H1 (cell line): ENCODE measurements at regions of chr2 and their contacts with region 1.

Region 1: DNA sequence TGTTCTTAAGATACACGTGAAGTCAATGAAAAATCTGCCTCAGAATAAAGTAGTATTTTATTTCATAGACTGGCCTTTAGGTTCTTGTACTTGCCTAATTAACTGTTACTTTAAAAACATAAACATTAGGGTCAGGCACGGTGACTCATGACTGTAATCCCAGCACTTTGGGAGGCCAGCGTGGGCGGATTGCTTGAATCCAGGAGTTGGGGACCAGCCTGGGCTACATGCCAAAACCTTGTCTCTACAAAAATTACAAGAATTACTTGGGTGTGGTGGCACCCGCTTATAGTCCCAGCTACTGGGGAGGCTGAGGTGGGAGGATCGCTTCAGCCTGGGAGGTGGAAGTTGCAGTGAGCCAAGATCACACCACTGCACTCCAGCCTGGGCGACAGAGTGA is 16.0 kb upstream of the SNORC start:
- DNase-seq: no peak
- H3K4me3 ChIP-seq: no peak overlapping the region
- H3K27ac ChIP-seq: no peak overlapping the region
- H3K4me1 ChIP-seq: no peaks in the 10 kb centered on the region
- H3K27me3 ChIP-seq: no peaks in the 10 kb centered on the region
- CTCF ChIP-seq: no peak
- EP300 ChIP-seq: no peak
- POLR2A ChIP-seq: no peak
- RAD21 ChIP-seq: no peak

Region 2: GRCh38 chr2:232843834-232844233 is 10.2 kb before region 1 on chr2:
- CTCF ChIA-PET with region 1: interaction called, 18 read pairs
- POLR2A ChIA-PET with region 1: no interaction called
- DNase-seq: no peak
- H3K4me3 ChIP-seq: no peak overlapping the region
- H3K27ac ChIP-seq: no peak overlapping the region
- H3K4me1 ChIP-seq: no peaks in the 10 kb centered on the region
- H3K27me3 ChIP-seq: no peaks in the 10 kb centered on the region
- CTCF ChIP-seq: peak in 2 of 3 experiments; percentile 4 to 8; a peak in 3 of 4 replicates
- EP300 ChIP-seq: no peak
- POLR2A ChIP-seq: no peak
- RAD21 ChIP-seq: 0 out of 4 replicates have a peak, but pooled peaks of 1 of the 2 experiments have one; percentile 8

Region 3: DNA sequence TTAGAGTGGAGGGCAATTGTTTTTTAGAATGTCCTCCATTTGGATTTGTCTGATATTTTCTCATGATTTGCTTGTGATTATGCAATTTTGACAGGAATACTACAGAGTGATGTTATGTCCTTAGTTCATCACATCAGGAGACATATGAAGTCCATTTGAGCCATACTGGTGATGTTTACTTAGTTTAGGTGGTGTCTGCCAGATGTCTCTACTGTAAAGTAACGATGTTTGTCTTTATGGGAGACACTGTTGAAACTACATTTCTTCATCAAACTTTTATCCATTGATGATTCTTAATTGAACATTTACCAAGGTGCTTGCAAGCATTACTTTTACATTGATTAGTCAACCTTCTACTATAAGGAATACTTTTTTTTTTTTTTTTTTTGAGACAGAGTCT is 11.1 kb after region 1 on chr2:
- CTCF ChIA-PET with region 1: interaction called, 14 read pairs
- POLR2A ChIA-PET with region 1: interaction called, 3 read pairs
- DNase-seq: no peak
- H3K4me3 ChIP-seq: no peak overlapping the region
- H3K27ac ChIP-seq: no peak overlapping the region
- H3K4me1 ChIP-seq: no peaks in the 10 kb centered on the region
- H3K27me3 ChIP-seq: no peaks in the 10 kb centered on the region
- CTCF ChIP-seq: no peak
- EP300 ChIP-seq: no peak
- POLR2A ChIP-seq: no peak
- RAD21 ChIP-seq: no peak

Region 4: DNA sequence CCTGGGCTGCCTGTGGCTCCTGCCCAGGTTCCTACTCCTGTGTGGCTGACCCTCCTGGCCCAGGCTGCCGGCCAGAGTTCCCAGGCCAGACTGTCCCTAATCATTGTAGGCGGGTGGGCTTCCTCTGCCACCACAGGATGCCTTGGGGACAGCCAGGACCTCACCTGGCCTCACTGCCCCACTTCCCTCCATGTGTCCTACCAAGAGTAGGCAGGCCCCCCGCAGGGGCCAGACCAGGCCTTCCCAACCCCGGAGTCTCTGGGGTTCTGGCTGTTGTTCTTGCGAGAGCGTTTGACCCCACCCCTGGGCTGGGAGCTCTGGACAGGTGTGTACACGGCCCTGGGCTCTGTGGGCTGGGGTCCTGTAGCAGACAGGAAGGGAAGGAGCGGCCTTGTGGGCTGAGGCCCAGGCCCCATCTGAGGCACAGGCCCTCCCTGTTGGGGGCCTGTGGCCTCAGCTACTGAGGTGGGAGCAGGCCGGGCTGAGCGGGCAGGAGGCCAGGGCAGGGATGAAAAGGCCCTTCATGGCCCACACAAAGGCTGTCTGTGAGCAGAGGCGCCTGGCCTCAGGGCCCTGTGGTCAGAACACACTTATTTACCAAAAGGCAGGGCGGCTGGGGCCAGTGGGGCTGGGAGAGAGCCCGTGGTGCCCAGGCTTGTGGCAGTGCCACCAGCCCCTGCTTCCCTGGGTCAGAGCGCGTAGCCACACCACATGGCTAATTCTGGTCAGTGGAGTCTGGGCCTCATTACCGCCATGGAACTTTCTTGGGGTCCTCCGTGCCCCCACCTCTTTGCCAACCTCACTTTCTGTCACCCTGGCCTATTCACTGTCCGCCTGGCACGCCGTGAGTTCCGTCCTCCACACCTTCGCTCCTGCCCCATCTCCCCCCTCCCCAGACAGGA is 18.0 kb after region 1 on chr2:
- CTCF ChIA-PET with region 1: interaction called, 14 read pairs
- POLR2A ChIA-PET with region 1: interaction called, 3 read pairs
- DNase-seq: no peak
- H3K4me3 ChIP-seq: no peak overlapping the region
- H3K27ac ChIP-seq: no peak overlapping the region
- H3K4me1 ChIP-seq: peaks cover 0 to 3% (median 1%) of the 10 kb centered on the region in 4 experiments; a peak in 4 of 7 replicates
- H3K27me3 ChIP-seq: peaks cover 0 to 16% (median 11%) of the 10 kb centered on the region in 4 experiments; a peak in 5 of 7 replicates
- CTCF ChIP-seq: no peak
- EP300 ChIP-seq: no peak
- POLR2A ChIP-seq: no peak
- RAD21 ChIP-seq: no peak

Region 5: GRCh38 chr2:233061591-233062450 is 207.7 kb after region 1 on chr2:
- CTCF ChIA-PET with region 1: interaction called, 11 read pairs
- POLR2A ChIA-PET with region 1: no interaction called
- DNase-seq: no peak
- H3K4me3 ChIP-seq: no peak overlapping the region
- H3K27ac ChIP-seq: no peak overlapping the region
- H3K4me1 ChIP-seq: peaks cover 0 to 10% (median 4%) of the 10 kb centered on the region in 4 experiments; a peak in 4 of 7 replicates
- H3K27me3 ChIP-seq: no peaks in the 10 kb centered on the region; a peak in 1 of 7 replicates
- CTCF ChIP-seq: peak; percentile 41 to 57 (median 43)
- EP300 ChIP-seq: no peak
- POLR2A ChIP-seq: no peak
- RAD21 ChIP-seq: peak in 1 of 2 experiments; percentile 32; a peak in 1 of 4 replicates